CD4-positive, alpha-beta memory T cell (primary cell): ENCODE measurements at regions of chr16 and their contacts with region 1.

Region 1: GRCh38 chr16:11715246-11715947 is 27.3 kb downstream of the TXNDC11 start:
- DNase-seq: no peak
- H3K4me3 ChIP-seq: no peak overlapping the region
- H3K4me3 Mint-ChIP-seq: no peak overlapping the region
- H3K27ac ChIP-seq: no peak overlapping the region
- H3K27ac Mint-ChIP-seq: peak overlapping the region in 1 of 7 donors; percentile 71
- H3K4me1 ChIP-seq: peaks cover 3% of the 10 kb centered on the region
- H3K4me1 Mint-ChIP-seq: peaks cover 12 to 32% (median 21%) of the 10 kb centered on the region in 4 donors
- H3K27me3 ChIP-seq: no peaks in the 10 kb centered on the region
- H3K27me3 Mint-ChIP-seq: no peaks in the 10 kb centered on the region

Region 2: DNA sequence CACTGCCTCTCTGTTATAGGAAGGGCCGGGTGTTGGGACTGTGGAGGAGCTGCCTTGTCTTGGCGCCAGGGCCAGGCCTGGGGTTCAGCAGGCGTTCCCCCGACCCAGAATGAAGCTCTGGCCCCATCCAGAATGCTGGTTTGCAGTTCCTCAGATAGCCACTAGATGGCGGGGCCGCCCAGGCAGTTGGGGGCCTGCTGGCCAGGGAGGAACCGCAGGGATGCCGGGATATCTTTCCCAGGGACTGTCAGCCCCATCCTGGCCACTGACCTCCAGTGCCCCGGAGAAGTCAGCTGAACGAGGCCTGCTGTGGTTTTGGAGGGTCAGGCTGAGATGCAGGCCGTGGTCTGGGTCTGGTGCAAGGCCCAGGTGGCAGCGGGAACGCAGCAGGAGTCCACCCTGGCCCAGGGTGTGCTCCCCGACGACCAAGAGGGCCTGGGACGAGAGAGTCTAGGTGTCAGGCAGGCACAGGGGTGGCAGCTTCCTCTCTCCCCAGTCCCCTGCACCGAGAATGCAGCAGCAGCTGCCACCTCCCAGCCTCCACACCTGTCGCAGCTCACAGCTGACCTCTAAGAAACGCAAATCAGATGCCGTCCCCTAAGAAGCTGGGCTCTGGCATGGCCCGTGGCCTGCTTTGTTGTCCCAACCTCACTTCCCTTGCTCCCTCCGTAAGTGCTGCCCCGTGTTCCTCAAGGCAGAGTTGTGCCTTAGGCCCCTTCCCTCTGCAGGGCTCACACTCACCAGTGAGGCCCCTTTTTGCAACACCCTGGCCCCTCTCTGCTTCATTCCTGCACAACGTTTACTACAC is 319.0 kb before region 1 on chr16:
- CTCF ChIA-PET with region 1: interaction called, 16 read pairs
- POLR2A ChIA-PET with region 1: no interaction called
- intact Hi-C with region 1: loop called (anchors 1 kb)
- DNase-seq: peak; percentile 51 to 65 (median 54)
- H3K4me3 ChIP-seq: no peak overlapping the region
- H3K4me3 Mint-ChIP-seq: no peak overlapping the region
- H3K27ac ChIP-seq: no peak overlapping the region
- H3K27ac Mint-ChIP-seq: peak overlapping the region in 1 of 7 donors; percentile 24
- H3K4me1 ChIP-seq: peaks cover 5% of the 10 kb centered on the region
- H3K4me1 Mint-ChIP-seq: peaks cover 0 to 5% (median 1%) of the 10 kb centered on the region in 4 donors
- H3K27me3 ChIP-seq: no peaks in the 10 kb centered on the region
- H3K27me3 Mint-ChIP-seq: no peaks in the 10 kb centered on the region

Region 3: GRCh38 chr16:11530171-11530940 is 185.0 kb before region 1 on chr16:
- CTCF ChIA-PET with region 1: interaction called, 79 read pairs
- POLR2A ChIA-PET with region 1: interaction called, 4 read pairs
- intact Hi-C with region 1: loop called (anchors 1 kb)
- DNase-seq: no peak
- H3K4me3 ChIP-seq: no peak overlapping the region
- H3K4me3 Mint-ChIP-seq: no peak overlapping the region
- H3K27ac ChIP-seq: no peak overlapping the region
- H3K27ac Mint-ChIP-seq: peak overlapping the region in 3 of 7 donors; percentile 10 to 40 (median 18)
- H3K4me1 ChIP-seq: no peaks in the 10 kb centered on the region
- H3K4me1 Mint-ChIP-seq: peaks cover 3 to 11% (median 5%) of the 10 kb centered on the region in 4 donors
- H3K27me3 ChIP-seq: no peaks in the 10 kb centered on the region
- H3K27me3 Mint-ChIP-seq: no peaks in the 10 kb centered on the region

Region 4: GRCh38 chr16:11677451-11677951 is 37.9 kb before region 1 on chr16:
- CTCF ChIA-PET with region 1: interaction called, 10 read pairs
- POLR2A ChIA-PET with region 1: no interaction called
- intact Hi-C with region 1: no loop called
- DNase-seq: no peak
- H3K4me3 ChIP-seq: no peak overlapping the region
- H3K4me3 Mint-ChIP-seq: peak overlapping the region in 1 of 8 donors; percentile 25
- H3K27ac ChIP-seq: no peak overlapping the region
- H3K27ac Mint-ChIP-seq: peak overlapping the region; percentile 55 to 82 (median 75)
- H3K4me1 ChIP-seq: peaks cover 52% of the 10 kb centered on the region
- H3K4me1 Mint-ChIP-seq: peaks cover 26 to 86% (median 56%) of the 10 kb centered on the region in 4 donors
- H3K27me3 ChIP-seq: no peaks in the 10 kb centered on the region
- H3K27me3 Mint-ChIP-seq: no peaks in the 10 kb centered on the region

Region 5: GRCh38 chr16:11698271-11698689 is 17.1 kb before region 1 on chr16:
- CTCF ChIA-PET with region 1: interaction called, 12 read pairs
- POLR2A ChIA-PET with region 1: no interaction called
- intact Hi-C with region 1: no loop called
- DNase-seq: peak in 1 of 5 donors; percentile 17
- H3K4me3 ChIP-seq: no peak overlapping the region
- H3K4me3 Mint-ChIP-seq: peak overlapping the region in 2 of 8 donors; percentile 8 to 46
- H3K27ac ChIP-seq: no peak overlapping the region
- H3K27ac Mint-ChIP-seq: peak overlapping the region in 6 of 7 donors; percentile 18 to 80 (median 71)
- H3K4me1 ChIP-seq: peaks cover 31% of the 10 kb centered on the region
- H3K4me1 Mint-ChIP-seq: peaks cover 34 to 61% (median 37%) of the 10 kb centered on the region in 4 donors
- H3K27me3 ChIP-seq: no peaks in the 10 kb centered on the region
- H3K27me3 Mint-ChIP-seq: no peaks in the 10 kb centered on the region